ENCODE measurements at regions of chr5 and their contacts with region 1.

Region 1: GRCh38 chr5:14399054-14399692 is 182.4 kb upstream of the OTULINL start:
- DNase-seq: no peak
- H3K4me3 ChIP-seq: no peak overlapping the region
- H3K27ac ChIP-seq: peak overlapping the region; percentile 11 to 56 (median 38)
- H3K4me1 ChIP-seq: peaks cover 4 to 39% (median 34%) of the 10 kb centered on the region in 4 donors
- H3K27me3 ChIP-seq: no peaks in the 10 kb centered on the region
- CTCF ChIP-seq: peak; percentile 57 to 75 (median 69)
- EP300 ChIP-seq: no peak
- POLR2A ChIP-seq: no peak

Region 2: DNA sequence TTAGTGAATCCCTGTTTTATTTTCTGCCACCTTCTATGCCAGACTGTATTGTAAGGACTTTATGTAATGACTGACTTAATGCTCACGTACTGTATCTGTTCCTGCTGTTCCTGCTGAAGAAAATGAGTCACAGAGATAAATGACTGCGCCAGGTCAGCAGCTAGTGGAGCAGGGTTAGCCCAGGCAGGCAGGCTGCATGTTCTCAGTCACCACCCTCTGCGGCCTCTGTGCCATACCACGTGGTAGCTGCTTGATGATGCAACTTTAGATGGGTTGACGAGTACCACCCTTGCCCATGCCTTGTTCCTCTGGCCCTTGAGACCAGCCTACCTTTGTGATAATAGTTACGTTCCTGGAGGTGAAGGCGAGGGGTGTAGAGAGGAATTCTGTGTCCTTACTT is 94.1 kb before region 1 on chr5:
- intact Hi-C with region 1: no loop called
- DNase-seq: no peak
- H3K4me3 ChIP-seq: no peak overlapping the region
- H3K27ac ChIP-seq: no peak overlapping the region
- H3K4me1 ChIP-seq: peaks cover 6 to 25% (median 18%) of the 10 kb centered on the region in 4 donors
- H3K27me3 ChIP-seq: no peaks in the 10 kb centered on the region
- CTCF ChIP-seq: no peak
- EP300 ChIP-seq: no peak
- POLR2A ChIP-seq: no peak

Region 3: GRCh38 chr5:14440582-14441431 is 41.6 kb after region 1 on chr5:
- intact Hi-C with region 1: no loop called
- DNase-seq: no peak
- H3K4me3 ChIP-seq: peak overlapping the region; percentile 54 to 66 (median 56)
- H3K27ac ChIP-seq: peak overlapping the region; percentile 81 to 88 (median 85)
- H3K4me1 ChIP-seq: peaks cover 29 to 55% (median 52%) of the 10 kb centered on the region in 4 donors
- H3K27me3 ChIP-seq: no peaks in the 10 kb centered on the region
- CTCF ChIP-seq: no peak
- EP300 ChIP-seq: no peak
- POLR2A ChIP-seq: no peak

Region 4: DNA sequence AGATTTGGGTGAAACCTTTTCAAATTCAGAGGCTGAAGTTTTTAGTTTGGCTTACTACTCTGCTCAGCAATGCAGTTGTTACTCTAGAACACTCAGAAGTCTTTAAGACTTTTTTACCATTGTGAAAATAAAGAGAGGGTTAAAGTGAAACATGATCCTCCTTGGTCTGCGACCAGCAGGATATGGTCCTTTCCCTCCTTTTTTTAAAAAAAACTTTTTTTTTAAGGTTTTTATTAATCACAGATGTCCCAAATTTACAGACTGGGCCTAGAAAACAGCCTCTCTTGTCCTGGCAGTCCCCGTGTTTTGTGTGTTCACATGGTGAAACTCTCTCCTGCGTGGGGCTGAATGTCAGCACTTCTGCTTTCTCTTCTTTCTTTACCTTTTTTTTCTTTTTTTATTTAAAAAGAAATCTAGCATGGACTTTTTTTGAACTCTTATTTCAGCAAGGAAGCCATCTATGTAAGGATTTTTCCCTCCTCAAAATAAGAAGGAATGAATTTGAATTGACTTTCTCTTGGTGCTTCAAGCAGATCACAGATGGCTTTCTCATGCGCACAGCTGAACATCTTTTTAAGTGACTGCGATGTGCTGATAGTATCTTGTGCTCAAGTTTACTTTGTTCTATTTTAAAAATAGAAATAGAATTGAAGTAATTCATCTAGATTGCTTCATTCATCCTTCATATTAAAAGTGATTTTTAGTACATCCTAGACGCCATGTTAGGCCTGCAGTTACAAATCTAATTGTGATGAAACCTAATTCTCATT is 53.7 kb after region 1 on chr5:
- intact Hi-C with region 1: no loop called
- DNase-seq: no peak
- H3K4me3 ChIP-seq: no peak overlapping the region
- H3K27ac ChIP-seq: peak overlapping the region; percentile 49 to 67 (median 54)
- H3K4me1 ChIP-seq: peaks cover 38 to 58% (median 55%) of the 10 kb centered on the region in 4 donors
- H3K27me3 ChIP-seq: no peaks in the 10 kb centered on the region
- CTCF ChIP-seq: no peak
- EP300 ChIP-seq: no peak
- POLR2A ChIP-seq: no peak

Region 5: DNA sequence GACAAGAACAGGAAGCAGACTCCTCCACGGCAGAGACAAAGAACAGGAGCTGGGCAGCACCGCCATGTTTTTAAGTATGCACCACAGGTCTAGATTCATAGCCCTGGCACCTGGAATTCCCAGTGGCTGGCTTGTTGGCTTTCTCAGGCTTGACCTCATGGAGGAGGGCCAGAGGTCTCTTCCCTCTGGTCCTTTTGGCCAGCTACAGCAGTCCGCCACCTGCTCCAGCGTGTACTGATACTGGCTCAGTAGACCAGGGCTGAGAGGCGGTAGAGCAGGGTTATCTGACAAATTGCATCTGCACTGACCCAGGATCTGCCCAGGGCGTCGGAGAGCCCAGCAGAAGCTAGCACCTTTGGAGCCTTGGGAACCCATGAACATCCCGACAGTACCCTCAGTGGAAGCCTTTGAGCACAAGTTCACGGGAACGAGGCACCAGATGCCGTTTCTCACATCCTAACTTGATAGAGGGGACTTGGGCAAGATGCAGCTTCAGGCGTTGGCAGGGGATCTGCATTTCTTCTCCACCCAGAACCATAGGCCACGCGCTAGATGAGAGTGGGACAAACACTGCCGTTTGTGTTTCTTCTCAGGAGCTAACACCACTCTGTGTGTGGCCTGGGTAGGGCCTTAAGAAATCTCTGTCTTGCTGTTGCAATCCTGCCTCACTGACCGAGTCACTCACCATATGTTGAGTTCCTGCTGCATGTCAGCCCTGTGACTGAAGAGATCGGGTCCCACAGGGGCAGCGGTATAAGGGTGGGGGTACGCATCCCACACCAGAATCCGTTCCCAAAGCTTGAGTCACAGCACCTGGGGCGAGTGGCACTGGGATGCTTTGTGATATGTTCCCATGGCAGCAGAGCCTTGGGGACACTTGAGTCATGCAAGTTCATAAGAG is 92.1 kb after region 1 on chr5:
- intact Hi-C with region 1: loop called (anchors 10 kb)
- DNase-seq: no peak
- H3K4me3 ChIP-seq: no peak overlapping the region
- H3K27ac ChIP-seq: peak overlapping the region in 1 of 4 donors; percentile 13
- H3K4me1 ChIP-seq: peaks cover 7 to 15% (median 10%) of the 10 kb centered on the region in 4 donors
- H3K27me3 ChIP-seq: no peaks in the 10 kb centered on the region
- CTCF ChIP-seq: no peak
- EP300 ChIP-seq: no peak
- POLR2A ChIP-seq: no peak

Region 6: GRCh38 chr5:14615344-14615743 is 216.2 kb after region 1 on chr5:
- intact Hi-C with region 1: no loop called
- DNase-seq: no peak
- H3K4me3 ChIP-seq: no peak overlapping the region
- H3K27ac ChIP-seq: no peak overlapping the region
- H3K4me1 ChIP-seq: no peaks in the 10 kb centered on the region
- H3K27me3 ChIP-seq: no peaks in the 10 kb centered on the region
- CTCF ChIP-seq: no peak
- EP300 ChIP-seq: no peak
- POLR2A ChIP-seq: no peak

Region 7: DNA sequence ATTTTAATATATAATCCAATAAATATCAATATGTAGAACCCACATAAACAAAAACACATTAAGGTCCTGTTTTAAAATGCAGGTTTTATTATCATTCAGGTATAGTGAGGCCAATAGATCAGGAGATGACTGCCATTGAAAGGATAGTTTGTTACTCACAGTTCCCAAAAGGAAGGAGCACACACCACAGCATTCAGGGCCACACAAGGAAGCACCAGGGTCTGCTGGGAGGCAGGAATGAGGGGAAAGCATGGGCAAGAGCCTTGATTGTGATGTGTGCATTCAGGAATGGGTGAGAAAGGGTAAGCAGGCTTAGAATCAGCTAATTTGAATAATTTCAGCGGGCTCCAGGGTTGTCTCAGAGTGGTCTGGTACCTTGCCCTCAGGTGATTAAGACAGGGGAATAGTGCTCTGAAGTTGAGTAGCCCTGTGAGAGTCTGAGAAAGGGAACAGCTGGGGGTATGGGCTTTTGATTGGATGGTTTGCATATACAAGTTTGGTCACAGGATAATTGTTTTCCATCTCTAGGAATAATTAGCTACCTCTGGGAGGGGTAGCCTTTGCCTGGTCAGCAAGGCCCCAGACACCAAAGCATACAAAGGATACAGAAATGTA is 245.6 kb after region 1 on chr5:
- intact Hi-C with region 1: loop called (anchors 10 kb)
- DNase-seq: no peak
- H3K4me3 ChIP-seq: no peak overlapping the region
- H3K27ac ChIP-seq: no peak overlapping the region
- H3K4me1 ChIP-seq: peaks cover 0 to 4% (median 0%) of the 10 kb centered on the region in 4 donors
- H3K27me3 ChIP-seq: peaks cover 0 to 24% (median 0%) of the 10 kb centered on the region in 4 donors
- CTCF ChIP-seq: no peak
- EP300 ChIP-seq: no peak
- POLR2A ChIP-seq: no peak

Measured in esophagus muscularis mucosa (tissue), 4 donors.